Mammary epithelial cell (primary cell): ENCODE measurements at regions of chr6 and their contacts with region 1.

Region 1: GRCh38 chr6:121365536-121366521 is 31.5 kb upstream of the TBC1D32 start:
- DNase-seq: no peak
- H3K4me3 ChIP-seq: no peak overlapping the region
- H3K27ac ChIP-seq: no peak overlapping the region
- H3K4me1 ChIP-seq: no peaks in the 10 kb centered on the region
- H3K27me3 ChIP-seq: peaks cover 2% of the 10 kb centered on the region
- CTCF ChIP-seq: no peak

Region 2: DNA sequence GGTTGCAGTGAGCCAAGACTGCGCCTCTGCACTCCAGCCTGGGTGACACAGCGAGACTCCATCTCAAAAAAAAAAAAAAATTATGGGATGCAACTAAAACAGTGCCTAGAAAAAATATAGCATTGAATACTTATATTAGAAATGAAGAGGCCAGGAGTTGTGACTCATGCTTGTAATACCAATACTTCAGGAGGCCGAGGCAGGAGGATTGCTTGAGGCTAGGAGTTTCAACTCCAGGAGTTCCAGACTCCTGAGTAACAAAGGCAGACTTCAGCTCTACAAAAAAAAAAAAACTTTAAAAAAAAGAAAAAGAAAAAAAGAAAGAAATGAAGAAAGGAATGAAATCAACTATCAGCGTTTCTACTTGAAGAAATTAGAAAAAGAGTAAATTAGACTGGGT is 52.5 kb after region 1 on chr6:
- CTCF ChIA-PET with region 1: interaction called, 10 read pairs
- dilution Hi-C with region 1: no loop called
- in situ Hi-C with region 1: no loop called
- intact Hi-C with region 1: no loop called
- DNase-seq: no peak
- H3K4me3 ChIP-seq: no peak overlapping the region
- H3K27ac ChIP-seq: no peak overlapping the region
- H3K4me1 ChIP-seq: no peaks in the 10 kb centered on the region
- H3K27me3 ChIP-seq: no peaks in the 10 kb centered on the region
- CTCF ChIP-seq: no peak

Region 3: GRCh38 chr6:121428872-121429756 is 63.3 kb after region 1 on chr6:
- CTCF ChIA-PET with region 1: no interaction called
- dilution Hi-C with region 1: no loop called
- in situ Hi-C with region 1: no loop called
- intact Hi-C with region 1: no loop called
- DNase-seq: no peak
- H3K4me3 ChIP-seq: no peak overlapping the region
- H3K27ac ChIP-seq: no peak overlapping the region
- H3K4me1 ChIP-seq: no peaks in the 10 kb centered on the region
- H3K27me3 ChIP-seq: no peaks in the 10 kb centered on the region
- CTCF ChIP-seq: no peak